ENCODE measurements at regions of chr2 and their contacts with region 1.

Region 1: GRCh38 chr2:141392517-141393213 is 738.2 kb downstream of the LRP1B start:
- DNase-seq: no peak
- ATAC-seq: no peak
- H3K4me3 ChIP-seq: no peak overlapping the region
- H3K4me3 Mint-ChIP-seq: no peak overlapping the region
- H3K27ac ChIP-seq: no peak overlapping the region
- H3K27ac Mint-ChIP-seq: no peak overlapping the region
- H3K4me1 ChIP-seq: no peaks in the 10 kb centered on the region
- H3K4me1 Mint-ChIP-seq: no peaks in the 10 kb centered on the region
- H3K27me3 ChIP-seq: no peaks in the 10 kb centered on the region
- H3K27me3 Mint-ChIP-seq: no peaks in the 10 kb centered on the region
- CTCF ChIP-seq: no peak

Region 2: GRCh38 chr2:141423124-141423523 is 30.5 kb after region 1 on chr2:
- CTCF ChIA-PET with region 1: no interaction called
- POLR2A ChIA-PET with region 1: no interaction called
- intact Hi-C with region 1: loop called in 1 of 2 experiments (anchors 2 kb)
- DNase-seq: no peak
- ATAC-seq: no peak
- H3K4me3 ChIP-seq: no peak overlapping the region
- H3K4me3 Mint-ChIP-seq: no peak overlapping the region
- H3K27ac ChIP-seq: no peak overlapping the region
- H3K27ac Mint-ChIP-seq: no peak overlapping the region
- H3K4me1 ChIP-seq: no peaks in the 10 kb centered on the region
- H3K4me1 Mint-ChIP-seq: no peaks in the 10 kb centered on the region
- H3K27me3 ChIP-seq: no peaks in the 10 kb centered on the region
- H3K27me3 Mint-ChIP-seq: no peaks in the 10 kb centered on the region
- CTCF ChIP-seq: no peak

Region 3: DNA sequence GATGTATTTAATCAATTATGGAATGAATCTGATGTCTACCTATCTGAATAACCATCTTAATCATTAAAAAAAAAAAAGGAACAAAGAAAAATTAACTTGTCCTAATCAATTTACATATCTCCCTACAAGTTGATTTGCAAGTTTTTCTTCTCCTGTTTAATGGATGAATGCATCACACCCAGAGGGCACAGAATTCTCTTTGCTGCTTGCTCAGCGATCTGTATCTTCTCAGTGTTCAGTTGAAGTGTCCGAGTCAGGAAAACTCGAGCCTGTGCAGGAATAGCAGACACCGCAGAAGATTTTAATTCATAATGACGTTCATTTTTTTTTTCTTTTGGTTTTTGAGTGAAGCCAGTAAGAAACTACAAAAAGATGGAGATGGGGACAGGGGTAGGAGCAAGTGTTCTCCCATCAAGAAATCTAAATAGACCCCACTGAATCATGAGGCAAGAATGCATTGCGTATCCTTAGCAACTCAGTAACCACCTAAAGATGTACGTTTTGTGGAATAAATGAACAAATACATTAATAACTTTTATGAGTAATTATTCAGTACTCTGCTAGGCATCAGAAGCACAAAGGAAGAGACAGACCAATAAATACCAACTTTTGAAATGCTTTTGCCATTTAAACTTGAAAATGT is 62.6 kb after region 1 on chr2:
- CTCF ChIA-PET with region 1: no interaction called
- POLR2A ChIA-PET with region 1: no interaction called
- intact Hi-C with region 1: no loop called
- DNase-seq: no peak
- ATAC-seq: no peak
- H3K4me3 ChIP-seq: no peak overlapping the region
- H3K4me3 Mint-ChIP-seq: no peak overlapping the region
- H3K27ac ChIP-seq: no peak overlapping the region
- H3K27ac Mint-ChIP-seq: no peak overlapping the region
- H3K4me1 ChIP-seq: no peaks in the 10 kb centered on the region
- H3K4me1 Mint-ChIP-seq: no peaks in the 10 kb centered on the region
- H3K27me3 ChIP-seq: no peaks in the 10 kb centered on the region
- H3K27me3 Mint-ChIP-seq: no peaks in the 10 kb centered on the region
- CTCF ChIP-seq: no peak

Measured in CD4-positive, alpha-beta T cell (primary cell).